ENCODE measurements at regions of chr16 and their contacts with region 1.

Region 1: GRCh38 chr16:67928561-67929364 is 2.9 kb downstream of the CTRL start:
- DNase-seq: peak; percentile 80
- H3K4me3 ChIP-seq: no peak overlapping the region
- H3K27ac ChIP-seq: no peak overlapping the region
- H3K4me1 ChIP-seq: peaks cover 10% of the 10 kb centered on the region
- CTCF ChIP-seq: peak; percentile 90

Region 2: DNA sequence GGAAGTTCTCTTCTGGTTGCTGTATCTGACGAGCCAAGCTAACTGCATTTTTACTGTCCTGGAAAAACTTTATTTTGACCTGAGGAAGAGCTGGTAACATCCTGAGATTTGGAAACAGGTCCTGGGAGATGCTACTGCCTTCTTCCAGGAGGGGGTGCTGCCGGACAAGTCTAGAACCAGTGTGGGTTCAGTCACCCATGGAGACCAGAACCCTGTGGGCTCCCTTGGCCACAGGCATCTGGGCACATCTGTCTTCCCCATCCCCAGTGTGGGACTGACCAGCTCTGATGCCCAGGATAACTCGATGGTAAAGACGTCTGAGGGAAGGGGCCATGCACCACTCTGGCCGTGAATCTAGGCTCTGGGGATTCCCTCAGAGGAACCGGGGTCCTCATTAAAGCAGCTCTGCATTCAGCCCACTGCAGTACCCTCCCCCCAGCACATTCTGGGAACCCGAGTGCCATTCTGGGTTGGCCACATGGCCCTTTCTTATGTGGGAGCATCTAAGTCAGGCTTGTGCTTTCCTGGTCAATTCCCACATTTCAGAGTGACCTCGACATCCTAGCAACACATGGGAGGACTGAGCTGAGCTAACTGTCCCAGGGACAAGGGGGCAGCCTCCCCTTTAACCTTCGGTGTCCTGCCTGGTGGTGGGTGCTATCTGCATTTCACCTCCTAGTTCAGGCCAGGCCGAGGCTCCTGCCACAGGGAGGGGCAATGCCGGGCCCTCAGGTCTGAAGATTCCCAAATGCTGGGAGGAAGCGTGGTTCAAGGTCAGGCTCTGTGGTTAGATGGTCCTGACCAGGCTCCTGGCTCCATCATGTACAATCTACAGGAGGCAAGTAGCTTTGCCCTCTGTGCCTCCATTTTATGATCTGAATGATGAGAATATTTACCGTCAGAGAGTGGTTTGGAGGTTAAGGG is 255.8 kb before region 1 on chr16:
- CTCF ChIA-PET with region 1: no interaction called
- POLR2A ChIA-PET with region 1: no interaction called
- intact Hi-C with region 1: loop called (anchors 1 kb)
- DNase-seq: peak; percentile 80
- H3K4me3 ChIP-seq: no peak overlapping the region
- H3K27ac ChIP-seq: no peak overlapping the region
- H3K4me1 ChIP-seq: peaks cover 16% of the 10 kb centered on the region
- CTCF ChIP-seq: peak; percentile 94

Region 3: DNA sequence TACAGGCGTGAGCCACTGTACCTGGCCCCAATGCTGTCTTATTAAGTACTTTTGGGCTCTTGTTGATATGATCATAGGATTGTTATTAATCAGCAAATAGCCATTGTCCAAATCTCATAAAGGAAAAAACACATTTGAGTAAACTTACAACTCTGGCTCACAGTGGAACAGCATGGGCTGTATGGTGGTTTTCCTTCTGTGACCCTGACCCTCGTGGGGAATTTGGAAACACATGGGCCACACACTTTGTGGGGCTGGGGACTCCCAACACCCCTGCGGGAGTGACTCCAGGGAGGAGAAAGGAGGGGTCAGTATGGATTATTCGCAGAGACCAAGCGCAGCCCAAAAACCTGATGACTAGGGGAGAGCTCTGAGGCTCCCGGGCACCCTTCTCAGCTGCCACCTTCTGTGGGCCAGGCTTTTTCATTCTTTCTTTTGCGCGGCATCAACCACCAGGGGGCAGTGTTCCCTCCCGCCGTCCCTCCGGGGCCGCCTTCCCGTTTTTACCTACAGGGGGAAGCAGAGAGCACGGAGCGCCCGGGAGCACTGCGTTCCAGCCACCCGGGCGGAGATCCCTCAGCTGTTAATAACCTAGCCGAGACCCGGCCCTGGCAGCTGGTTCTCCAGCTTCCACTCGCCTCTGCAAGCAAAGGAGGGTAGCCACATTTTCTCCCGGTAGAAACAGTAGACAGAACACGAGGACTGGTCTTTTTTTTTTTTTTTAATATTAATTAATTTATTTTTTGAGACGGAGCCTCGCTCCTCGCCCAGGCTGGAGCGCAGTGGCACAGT is 112.3 kb before region 1 on chr16:
- CTCF ChIA-PET with region 1: no interaction called
- POLR2A ChIA-PET with region 1: no interaction called
- intact Hi-C with region 1: loop called (anchors 2 kb)
- DNase-seq: peak; percentile 87
- H3K4me3 ChIP-seq: no peak overlapping the region
- H3K27ac ChIP-seq: no peak overlapping the region
- H3K4me1 ChIP-seq: no peaks in the 10 kb centered on the region
- CTCF ChIP-seq: peak; percentile 100

Region 4: GRCh38 chr16:67841764-67842508 is 86.8 kb before region 1 on chr16 and contains the start of gene THAP11:
- CTCF ChIA-PET with region 1: no interaction called
- POLR2A ChIA-PET with region 1: no interaction called
- intact Hi-C with region 1: loop called (anchors 2 kb)
- DNase-seq: peak; percentile 97
- H3K4me3 ChIP-seq: peak within 1 kb of the TSS; percentile 99
- H3K27ac ChIP-seq: peak within 1 kb of the TSS; percentile 78
- H3K4me1 ChIP-seq: peaks cover 37% of the 10 kb centered on the region
- CTCF ChIP-seq: peak; percentile 75
- total RNA-seq, gene THAP11: 52.9 and 66.3 TPM in 2 replicates

Region 5: DNA sequence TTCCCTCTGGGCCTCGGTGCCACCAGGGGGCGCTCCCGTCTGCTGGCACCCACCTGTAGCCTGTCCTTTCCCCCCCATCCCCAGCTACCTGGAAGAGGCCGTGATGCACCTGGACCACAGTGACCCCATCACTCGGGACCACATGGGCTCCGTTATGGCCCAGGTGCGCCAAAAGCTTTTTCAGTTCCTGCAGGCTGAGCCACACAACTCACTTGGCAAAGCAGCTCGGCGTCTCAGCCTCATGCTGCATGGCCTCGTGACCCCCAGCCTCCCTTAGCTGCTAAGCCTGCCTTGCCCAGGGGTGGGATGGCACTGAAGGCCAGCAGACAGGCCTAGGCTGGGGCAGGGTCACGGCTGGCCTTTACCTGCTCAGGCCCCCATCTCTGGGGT is 44.9 kb before region 1 on chr16:
- CTCF ChIA-PET with region 1: interaction called, 8 read pairs
- POLR2A ChIA-PET with region 1: no interaction called
- intact Hi-C with region 1: loop called (anchors 1 kb)
- DNase-seq: peak; percentile 62
- H3K4me3 ChIP-seq: no peak overlapping the region
- H3K27ac ChIP-seq: no peak overlapping the region
- H3K4me1 ChIP-seq: no peaks in the 10 kb centered on the region
- CTCF ChIP-seq: peak; percentile 92

Measured in OCI-LY7 (cell line).